ENCODE measurements at regions of chr3 and their contacts with region 1.

Region 1: DNA sequence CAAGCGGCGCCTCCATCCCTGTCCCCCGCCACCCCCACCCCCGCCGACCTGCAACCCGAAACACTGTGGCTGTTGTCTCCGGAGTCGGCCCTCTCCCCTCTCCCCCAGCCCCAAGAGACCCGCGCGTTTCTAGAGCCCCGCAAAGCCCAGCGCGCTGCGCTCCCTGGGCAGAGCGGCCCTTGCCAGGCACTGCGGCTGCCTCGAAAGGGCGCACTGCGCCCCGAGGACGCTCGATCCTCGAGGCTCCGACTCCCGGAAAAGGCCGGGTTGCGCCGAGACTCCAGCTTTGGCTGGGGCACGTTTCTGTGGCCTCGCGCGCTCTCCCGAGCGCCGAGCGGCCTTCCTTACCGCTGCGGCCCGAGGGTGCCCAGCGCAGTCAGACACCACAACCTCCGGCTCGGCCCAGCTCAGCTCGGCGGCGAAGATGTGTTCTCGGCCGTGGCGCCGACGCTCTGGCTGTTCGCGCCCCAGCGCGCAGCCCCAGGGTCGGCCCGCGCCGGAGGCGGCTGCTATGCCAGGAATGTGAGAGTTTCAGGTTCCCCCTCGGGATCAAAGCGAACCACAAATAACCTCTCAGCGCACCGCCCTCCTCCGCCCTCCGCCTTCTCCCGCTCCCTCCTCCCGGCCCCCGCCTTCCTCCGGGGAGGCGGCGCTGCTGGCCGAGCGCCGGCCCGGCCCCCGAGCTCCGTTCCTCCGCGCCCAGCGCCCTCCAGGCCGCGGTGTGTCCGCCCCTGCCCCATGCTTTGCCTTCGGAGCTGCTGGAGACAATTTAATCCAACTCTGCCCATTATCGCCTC is at the start of gene AMOTL2:
- DNase-seq: peak; percentile 93
- total RNA-seq, gene AMOTL2: 64.6 TPM

Region 2: DNA sequence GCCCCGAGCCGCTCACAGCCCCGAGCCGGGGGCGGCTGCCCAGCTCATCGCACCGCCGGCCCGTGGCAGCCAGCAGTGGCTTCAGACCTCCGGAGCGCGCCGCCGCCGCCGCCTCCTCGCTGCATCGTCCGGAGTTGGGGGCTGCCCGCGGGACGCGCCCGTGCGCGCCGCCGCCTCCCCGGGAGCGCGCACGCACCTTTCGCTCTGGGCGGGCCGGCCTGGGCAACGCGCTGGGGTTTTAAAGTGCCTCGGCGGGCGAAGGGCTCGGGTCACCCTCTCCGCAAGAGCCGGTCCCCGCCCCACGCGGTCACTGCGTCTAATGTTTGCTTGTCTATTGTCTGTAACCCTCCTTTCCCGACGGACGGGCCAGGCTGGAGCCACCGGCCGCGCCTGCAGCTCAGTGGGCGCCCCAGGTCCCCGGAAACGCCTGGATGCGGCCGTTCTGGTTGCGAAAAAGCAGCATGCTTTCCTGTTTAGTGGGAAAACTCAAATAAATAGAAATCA is 123.4 kb before region 1 on chr3 and contains the start of gene RYK:
- intact Hi-C with region 1: loop called (anchors 5 kb)
- DNase-seq: peak; percentile 92
- total RNA-seq, gene RYK: 44.2 TPM

Region 3: DNA sequence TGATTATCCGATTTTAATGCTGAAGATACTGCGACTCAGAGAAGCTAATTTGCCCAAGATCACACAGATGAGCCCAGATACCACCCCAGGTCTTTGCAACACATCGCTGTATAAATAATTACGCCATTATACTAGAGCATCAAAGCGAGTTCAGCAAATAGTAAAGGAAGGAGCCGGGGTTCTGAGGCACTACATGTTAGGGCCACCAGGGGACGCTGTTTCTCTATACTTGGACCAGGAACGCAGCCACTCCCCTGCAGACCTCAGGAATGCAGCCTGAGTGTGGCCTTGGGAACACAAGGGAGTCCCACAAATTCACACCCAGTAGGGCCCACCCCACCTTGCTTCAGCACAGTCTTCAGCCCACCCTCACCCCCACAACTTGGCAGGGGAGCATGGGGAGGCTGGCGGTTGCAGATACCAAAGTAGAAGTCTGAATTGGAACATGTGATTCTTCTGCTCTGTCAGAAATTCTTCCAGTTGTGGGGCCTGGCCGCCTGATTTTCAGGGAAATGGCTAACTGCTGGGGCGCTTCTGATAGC is 65.8 kb before region 1 on chr3:
- intact Hi-C with region 1: loop called (anchors 1 kb)
- DNase-seq: peak; percentile 85

Region 4: DNA sequence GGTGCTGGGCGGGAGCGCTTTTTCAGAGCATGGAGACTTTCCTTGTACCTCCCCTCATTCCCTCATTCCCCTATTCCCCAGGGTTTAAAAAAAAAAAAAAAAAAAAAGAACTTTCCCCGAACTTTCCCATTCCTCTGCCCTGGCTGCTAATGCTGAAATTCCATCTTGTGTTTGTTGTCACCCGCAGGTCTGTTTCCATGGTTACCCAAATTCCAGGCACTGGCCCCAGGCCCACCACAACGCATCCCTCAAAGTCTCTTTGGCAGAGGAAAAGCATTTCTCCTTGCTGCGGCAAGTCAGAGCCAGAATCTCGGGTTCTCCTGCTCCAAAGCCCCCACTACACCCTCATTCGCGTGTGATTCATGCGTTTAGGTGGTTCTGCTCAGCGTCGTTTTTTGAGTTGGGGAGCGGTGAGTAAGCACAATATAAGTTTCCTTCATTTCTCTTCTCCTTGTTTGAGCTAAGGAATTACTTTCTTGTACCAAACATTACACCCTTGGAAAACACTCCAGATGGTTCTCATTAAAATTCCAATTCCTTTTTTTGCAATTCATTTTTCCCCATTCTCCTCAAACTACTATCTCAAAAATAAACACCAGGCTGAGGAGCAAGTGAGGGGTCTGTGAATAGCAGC is 90.0 kb after region 1 on chr3:
- intact Hi-C with region 1: loop called (anchors 5 kb)
- DNase-seq: no peak

Region 5: DNA sequence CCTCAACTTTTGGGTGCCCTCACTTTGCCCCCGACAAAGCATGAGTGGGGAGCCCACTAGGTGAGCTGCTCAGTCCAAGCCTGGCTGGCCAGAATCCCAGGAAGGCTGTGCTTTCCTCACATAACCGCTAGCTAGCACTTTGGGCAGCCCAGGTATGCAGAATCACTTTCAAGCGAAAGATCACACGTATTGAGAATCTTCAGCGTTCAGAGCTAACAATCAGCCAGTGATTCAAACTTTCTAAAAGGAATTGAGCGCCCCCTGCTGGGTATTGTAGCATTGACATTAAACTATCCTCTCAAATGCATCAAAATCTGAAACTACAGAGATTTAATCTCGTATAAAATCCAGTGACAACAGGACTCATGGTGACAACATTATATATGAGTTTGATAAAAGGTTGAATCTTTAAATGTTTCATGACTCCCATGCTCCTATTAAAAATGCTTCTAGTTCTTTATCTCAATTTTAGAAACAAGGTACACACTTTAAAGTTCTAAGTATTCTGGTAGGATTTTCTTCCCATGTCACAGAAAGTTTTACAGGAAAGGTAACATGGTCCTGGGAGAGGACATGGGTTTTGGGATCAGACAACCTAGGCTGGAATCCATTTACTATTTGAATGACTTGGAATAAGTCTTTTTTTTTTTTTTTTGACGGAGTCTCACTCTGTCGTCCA is 99.8 kb after region 1 on chr3:
- intact Hi-C with region 1: loop called (anchors 2 kb)
- DNase-seq: no peak

Region 6: GRCh38 chr3:134567605-134568004 is 193.4 kb after region 1 on chr3:
- intact Hi-C with region 1: no loop called
- DNase-seq: no peak